Common myeloid progenitor, CD34-positive (primary cell): ENCODE measurements at regions of chr22 and their contacts with region 1.

Region 1: GRCh38 chr22:27885977-27886842 is 32.8 kb downstream of the PITPNB start:
- DNase-seq: peak; percentile 44 to 68 (median 62)
- H3K4me3 ChIP-seq: no peak overlapping the region
- H3K27ac ChIP-seq: no peak overlapping the region
- H3K4me1 ChIP-seq: peaks cover 0 to 16% (median 9%) of the 10 kb centered on the region in 4 experiments
- H3K27me3 ChIP-seq: no peaks in the 10 kb centered on the region

Region 2: GRCh38 chr22:27825174-27825573 is 61.0 kb before region 1 on chr22:
- CTCF ChIA-PET with region 1: no interaction called
- POLR2A ChIA-PET with region 1: no interaction called
- DNase-seq: peak in 2 of 3 donors; percentile 30 to 32
- H3K4me3 ChIP-seq: no peak overlapping the region
- H3K27ac ChIP-seq: no peak overlapping the region
- H3K4me1 ChIP-seq: peaks cover 0 to 5% (median 0%) of the 10 kb centered on the region in 4 experiments
- H3K27me3 ChIP-seq: no peaks in the 10 kb centered on the region

Region 3: DNA sequence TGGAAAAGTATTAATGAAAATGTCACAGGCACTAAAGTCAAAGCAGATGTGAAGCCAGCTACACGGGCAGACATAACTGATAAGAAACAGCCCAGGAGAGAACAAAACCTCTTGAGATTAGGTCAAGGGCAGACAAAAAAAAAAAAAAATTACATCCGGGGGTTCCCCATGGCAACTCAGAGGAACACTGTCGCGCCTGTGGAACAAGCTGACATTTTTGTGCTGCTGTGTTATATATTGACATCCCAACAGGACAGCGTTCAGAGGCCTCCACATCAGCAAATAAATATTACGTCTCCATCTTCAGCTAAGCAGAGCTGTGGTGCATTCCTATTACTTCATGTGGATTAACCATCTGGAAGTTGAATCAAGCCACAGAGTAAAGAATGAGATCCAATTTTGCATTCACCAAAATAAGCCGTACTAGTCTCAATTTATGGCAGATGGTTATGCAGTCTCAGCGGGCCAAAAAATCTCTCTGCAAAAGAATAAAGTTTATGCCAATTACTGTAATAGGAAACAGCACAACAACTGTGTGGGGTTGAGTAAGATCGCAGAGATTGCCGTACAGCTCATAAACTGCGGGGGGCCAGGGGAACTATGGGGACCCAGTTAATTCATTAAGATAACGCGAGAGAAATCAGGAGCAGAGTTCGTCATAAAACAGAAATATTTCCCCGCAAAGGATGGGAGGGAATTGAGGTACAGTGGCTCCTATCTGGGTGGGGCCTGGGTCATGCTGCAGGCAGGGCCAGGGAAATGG is 43.4 kb before region 1 on chr22:
- CTCF ChIA-PET with region 1: no interaction called
- POLR2A ChIA-PET with region 1: no interaction called
- DNase-seq: no peak
- H3K4me3 ChIP-seq: no peak overlapping the region
- H3K27ac ChIP-seq: no peak overlapping the region
- H3K4me1 ChIP-seq: no peaks in the 10 kb centered on the region
- H3K27me3 ChIP-seq: no peaks in the 10 kb centered on the region

Region 4: GRCh38 chr22:27873472-27873871 is 12.7 kb before region 1 on chr22:
- CTCF ChIA-PET with region 1: interaction called, 12 read pairs
- POLR2A ChIA-PET with region 1: no interaction called
- DNase-seq: no peak
- H3K4me3 ChIP-seq: no peak overlapping the region
- H3K27ac ChIP-seq: no peak overlapping the region
- H3K4me1 ChIP-seq: peaks cover 2 to 17% (median 7%) of the 10 kb centered on the region in 4 experiments
- H3K27me3 ChIP-seq: no peaks in the 10 kb centered on the region

Region 5: GRCh38 chr22:27900153-27900552 is 13.9 kb after region 1 on chr22:
- CTCF ChIA-PET with region 1: interaction called, 14 read pairs
- POLR2A ChIA-PET with region 1: no interaction called
- DNase-seq: no peak
- H3K4me3 ChIP-seq: no peak overlapping the region
- H3K27ac ChIP-seq: no peak overlapping the region
- H3K4me1 ChIP-seq: no peaks in the 10 kb centered on the region
- H3K27me3 ChIP-seq: no peaks in the 10 kb centered on the region

Region 6: GRCh38 chr22:27913162-27913741 is 27.0 kb after region 1 on chr22:
- CTCF ChIA-PET with region 1: interaction called, 10 read pairs
- POLR2A ChIA-PET with region 1: no interaction called
- DNase-seq: no peak
- H3K4me3 ChIP-seq: no peak overlapping the region
- H3K27ac ChIP-seq: peak overlapping the region in 1 of 2 experiments; percentile 20
- H3K4me1 ChIP-seq: peaks cover 7 to 32% (median 13%) of the 10 kb centered on the region in 4 experiments
- H3K27me3 ChIP-seq: no peaks in the 10 kb centered on the region

Region 7: GRCh38 chr22:28009272-28009827 is 123.1 kb after region 1 on chr22:
- CTCF ChIA-PET with region 1: interaction called, 41 read pairs
- POLR2A ChIA-PET with region 1: no interaction called
- DNase-seq: peak; percentile 66 to 84 (median 76)
- H3K4me3 ChIP-seq: no peak overlapping the region
- H3K27ac ChIP-seq: no peak overlapping the region
- H3K4me1 ChIP-seq: no peaks in the 10 kb centered on the region
- H3K27me3 ChIP-seq: no peaks in the 10 kb centered on the region

Region 8: GRCh38 chr22:28019881-28020871 is 134.0 kb after region 1 on chr22:
- CTCF ChIA-PET with region 1: interaction called, 13 read pairs
- POLR2A ChIA-PET with region 1: no interaction called
- DNase-seq: peak; percentile 54 to 68 (median 64)
- H3K4me3 ChIP-seq: no peak overlapping the region
- H3K27ac ChIP-seq: no peak overlapping the region
- H3K4me1 ChIP-seq: peaks cover 0 to 18% (median 17%) of the 10 kb centered on the region in 4 experiments
- H3K27me3 ChIP-seq: no peaks in the 10 kb centered on the region